Activated CD4-positive, alpha-beta T cell treated with anti-CD3 and anti-CD28 coated beads, Interleukin-2, amount 10 ng/mL, durations not matched to agents 24 days and 14 days (primary cell): ENCODE measurements at regions of chr3 and their contacts with region 1.

Region 1: GRCh38 chr3:11060500-11061251 is 68.1 kb downstream of the SLC6A1 start:
- DNase-seq: peak; percentile 84
- H3K4me3 Mint-ChIP-seq: no peak overlapping the region
- H3K27ac Mint-ChIP-seq: no peak overlapping the region
- H3K4me1 Mint-ChIP-seq: no peaks in the 10 kb centered on the region
- H3K27me3 Mint-ChIP-seq: peaks cover 5% of the 10 kb centered on the region

Region 2: DNA sequence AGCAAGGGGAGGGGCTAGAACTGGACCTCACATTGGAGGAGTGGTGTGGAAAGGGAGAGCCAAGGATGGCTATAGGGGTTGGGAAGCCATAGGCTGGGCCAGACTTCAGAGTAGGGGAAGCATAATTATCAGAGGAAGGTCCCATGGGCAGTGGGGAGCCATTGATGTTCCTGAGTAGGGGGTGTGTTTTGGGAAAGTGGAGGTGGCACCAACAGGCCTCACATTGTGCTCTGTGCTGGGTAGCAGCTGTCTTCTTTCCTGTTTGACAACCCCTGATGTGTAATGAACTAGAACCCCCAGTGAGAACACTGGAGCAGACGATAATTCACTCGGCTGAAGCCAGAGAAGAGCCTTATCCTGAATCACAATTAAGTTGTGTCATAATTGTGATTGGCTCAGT is 203.4 kb before region 1 on chr3:
- intact Hi-C with region 1: no loop called
- DNase-seq: no peak
- H3K4me3 Mint-ChIP-seq: no peak overlapping the region
- H3K27ac Mint-ChIP-seq: no peak overlapping the region
- H3K4me1 Mint-ChIP-seq: no peaks in the 10 kb centered on the region
- H3K27me3 Mint-ChIP-seq: no peaks in the 10 kb centered on the region

Region 3: GRCh38 chr3:11335056-11335608 is 274.5 kb after region 1 on chr3:
- intact Hi-C with region 1: loop called (anchors 1 kb)
- DNase-seq: peak; percentile 80
- H3K4me3 Mint-ChIP-seq: no peak overlapping the region
- H3K27ac Mint-ChIP-seq: no peak overlapping the region
- H3K4me1 Mint-ChIP-seq: peaks cover 5% of the 10 kb centered on the region
- H3K27me3 Mint-ChIP-seq: no peaks in the 10 kb centered on the region

Region 4: DNA sequence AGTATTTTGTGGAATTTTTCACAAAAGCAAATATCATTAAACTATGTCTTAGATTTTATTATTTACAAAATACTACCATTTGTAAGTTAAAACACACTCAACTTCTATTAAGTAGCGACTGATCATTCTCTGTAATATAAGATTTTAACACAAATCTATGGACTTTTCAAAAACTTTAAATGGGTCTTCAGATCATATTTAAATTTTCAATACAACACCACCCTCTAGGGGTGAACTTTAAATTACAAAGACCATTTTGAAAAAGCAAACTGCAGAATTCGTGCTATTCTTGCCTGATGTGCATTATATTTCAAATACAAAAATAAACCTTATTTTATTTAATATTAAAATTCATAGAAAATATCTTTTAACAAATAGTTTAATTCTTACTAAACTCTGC is 591.2 kb after region 1 on chr3:
- intact Hi-C with region 1: loop called (anchors 10 kb)
- DNase-seq: no peak
- H3K4me3 Mint-ChIP-seq: no peak overlapping the region
- H3K27ac Mint-ChIP-seq: no peak overlapping the region
- H3K4me1 Mint-ChIP-seq: peaks cover 5% of the 10 kb centered on the region
- H3K27me3 Mint-ChIP-seq: peaks cover 28% of the 10 kb centered on the region